T-cell (primary cell): ENCODE measurements at regions of chr12 and their contacts with region 1.

Region 1: GRCh38 chr12:126191031-126191891 is 1126.0 kb downstream of the AACS start:
- DNase-seq: no peak
- ATAC-seq: no peak
- H3K4me3 ChIP-seq: no peak overlapping the region
- H3K4me3 Mint-ChIP-seq: no peak overlapping the region
- H3K27ac ChIP-seq: no peak overlapping the region
- H3K27ac Mint-ChIP-seq: no peak overlapping the region
- H3K4me1 ChIP-seq: no peaks in the 10 kb centered on the region
- H3K4me1 Mint-ChIP-seq: peaks cover 0 to 2% (median 0%) of the 10 kb centered on the region in 3 donors
- H3K27me3 ChIP-seq: peaks cover 2 to 25% of the 10 kb centered on the region in 2 experiments
- H3K27me3 Mint-ChIP-seq: peaks cover 5 to 17% of the 10 kb centered on the region in 2 donors

Region 2: GRCh38 chr12:126087692-126088091 is 103.6 kb before region 1 on chr12:
- CTCF ChIA-PET with region 1: interaction called in 1 of 2 experiments, 12 read pairs
- POLR2A ChIA-PET with region 1: no interaction called
- DNase-seq: no peak
- ATAC-seq: no peak
- H3K4me3 ChIP-seq: no peak overlapping the region
- H3K4me3 Mint-ChIP-seq: no peak overlapping the region
- H3K27ac ChIP-seq: no peak overlapping the region
- H3K27ac Mint-ChIP-seq: no peak overlapping the region
- H3K4me1 ChIP-seq: no peaks in the 10 kb centered on the region
- H3K4me1 Mint-ChIP-seq: no peaks in the 10 kb centered on the region
- H3K27me3 ChIP-seq: no peaks in the 10 kb centered on the region
- H3K27me3 Mint-ChIP-seq: no peaks in the 10 kb centered on the region